ENCODE measurements at regions of chr9 and their contacts with region 1.

Region 1: GRCh38 chr9:92293452-92294296 is at the start of gene IARS1:
- DNase-seq: peak; percentile 99
- ATAC-seq: peak; percentile 95
- H3K4me3 Mint-ChIP-seq: peak within 1 kb of the TSS; percentile 87
- H3K27ac Mint-ChIP-seq: peak within 1 kb of the TSS; percentile 98
- H3K4me1 Mint-ChIP-seq: peaks cover 56% of the 10 kb centered on the region
- H3K27me3 Mint-ChIP-seq: no peaks in the 10 kb centered on the region
- total RNA-seq, gene IARS1: 261 to 286 TPM

Region 2: DNA sequence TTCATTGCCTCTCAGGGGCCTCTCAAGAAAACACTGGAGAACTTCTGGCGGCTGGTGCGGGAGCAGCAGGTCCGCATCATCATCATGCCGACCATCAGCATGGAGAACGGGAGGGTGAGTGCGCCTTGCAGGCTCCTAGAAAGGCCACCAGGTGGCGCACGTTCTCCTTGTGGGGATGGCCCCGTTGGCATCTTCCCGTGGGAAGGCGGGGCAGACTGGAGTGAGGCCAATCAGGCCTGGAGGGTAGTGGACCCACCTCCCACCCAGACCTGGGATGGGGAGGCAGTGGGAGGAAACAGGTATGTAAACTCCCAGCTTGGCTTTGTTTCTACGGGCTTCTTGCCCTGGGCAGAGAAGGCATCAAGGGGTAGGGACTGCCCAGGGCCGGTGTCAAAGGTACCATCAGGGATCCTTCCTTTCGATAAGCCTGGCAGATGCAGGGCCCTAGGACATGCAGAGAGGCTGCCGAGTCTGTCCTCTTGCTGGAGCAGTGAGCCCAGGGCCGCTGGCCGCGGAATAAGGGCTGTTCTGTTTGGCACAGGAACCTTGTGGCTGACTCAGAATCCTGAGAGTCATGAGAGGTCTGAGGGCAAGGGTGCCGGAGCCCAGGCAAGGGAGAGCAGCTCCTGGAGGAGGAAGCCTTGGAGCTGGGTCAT is 159.6 kb before region 1 on chr9:
- CTCF ChIA-PET with region 1: interaction called, 3 read pairs
- POLR2A ChIA-PET with region 1: no interaction called
- intact Hi-C with region 1: loop called in 1 of 2 experiments (anchors 5 kb)
- DNase-seq: peak; percentile 91
- ATAC-seq: peak; percentile 92
- H3K4me3 Mint-ChIP-seq: peak overlapping the region; percentile 15
- H3K27ac Mint-ChIP-seq: no peak overlapping the region
- H3K4me1 Mint-ChIP-seq: peaks cover 4% of the 10 kb centered on the region
- H3K27me3 Mint-ChIP-seq: peaks cover 22% of the 10 kb centered on the region

Region 3: GRCh38 chr9:92254381-92255337 is 39.0 kb before region 1 on chr9:
- CTCF ChIA-PET with region 1: no interaction called
- POLR2A ChIA-PET with region 1: interaction called, 3 read pairs
- intact Hi-C with region 1: loop called (anchors 5 kb)
- DNase-seq: no peak
- ATAC-seq: no peak
- H3K4me3 Mint-ChIP-seq: no peak overlapping the region
- H3K27ac Mint-ChIP-seq: no peak overlapping the region
- H3K4me1 Mint-ChIP-seq: no peaks in the 10 kb centered on the region
- H3K27me3 Mint-ChIP-seq: no peaks in the 10 kb centered on the region

Region 4: DNA sequence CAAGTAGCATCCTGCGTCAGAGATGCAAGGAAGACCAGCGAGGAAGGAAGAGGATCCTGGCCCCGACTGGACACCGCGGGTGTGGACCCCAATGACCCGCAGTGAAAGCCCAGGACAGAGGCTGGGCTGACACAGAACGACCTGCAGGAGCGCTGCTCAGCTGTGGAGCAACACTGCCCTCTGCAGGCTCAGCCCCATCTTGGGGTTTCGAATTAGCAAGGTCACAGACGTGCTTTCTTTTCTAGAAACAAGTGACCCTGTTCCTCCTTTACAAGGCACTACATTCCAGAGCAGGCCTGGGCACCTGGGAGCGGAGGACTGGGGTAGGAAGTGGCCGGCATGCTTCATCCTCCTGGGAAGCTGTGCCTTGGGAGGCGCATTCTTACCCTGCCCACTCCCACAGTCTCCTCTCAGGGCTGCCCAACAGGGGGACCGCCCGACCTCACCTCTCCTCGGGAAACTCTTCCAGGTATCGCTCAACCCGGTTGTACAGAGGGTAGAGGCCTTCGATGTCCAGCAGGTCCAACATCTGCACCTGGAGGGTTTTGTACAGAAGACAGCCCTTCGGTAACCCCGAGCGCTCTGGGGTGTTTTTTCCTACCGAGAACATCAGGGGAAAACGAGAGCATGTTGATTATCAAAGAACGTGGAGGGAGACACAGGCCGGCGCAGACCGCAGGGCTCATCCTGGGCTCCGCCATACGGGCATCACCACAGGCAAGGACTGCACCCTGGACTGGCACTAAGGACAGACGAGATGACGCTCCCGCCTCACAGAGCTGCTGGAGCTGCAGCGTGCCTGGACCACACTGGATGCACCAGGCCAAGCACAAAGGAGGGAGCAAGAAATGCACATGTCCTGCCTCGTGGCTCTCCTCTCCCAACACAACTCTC is 341.3 kb after region 1 on chr9:
- CTCF ChIA-PET with region 1: no interaction called
- POLR2A ChIA-PET with region 1: no interaction called
- intact Hi-C with region 1: loop called in 1 of 2 experiments (anchors 10 kb)
- DNase-seq: peak; percentile 83
- ATAC-seq: peak; percentile 69
- H3K4me3 Mint-ChIP-seq: no peak overlapping the region
- H3K27ac Mint-ChIP-seq: no peak overlapping the region
- H3K4me1 Mint-ChIP-seq: peaks cover 6% of the 10 kb centered on the region
- H3K27me3 Mint-ChIP-seq: no peaks in the 10 kb centered on the region

Region 5: GRCh38 chr9:92877531-92878430 is 584.1 kb after region 1 on chr9 and contains the start of gene ZNF484:
- CTCF ChIA-PET with region 1: no interaction called
- POLR2A ChIA-PET with region 1: no interaction called
- intact Hi-C with region 1: loop called in 1 of 2 experiments (anchors 10 kb)
- DNase-seq: peak; percentile 98
- ATAC-seq: peak; percentile 97
- H3K4me3 Mint-ChIP-seq: peak within 1 kb of the TSS; percentile 99
- H3K27ac Mint-ChIP-seq: peak within 1 kb of the TSS; percentile 97
- H3K4me1 Mint-ChIP-seq: peaks cover 46% of the 10 kb centered on the region
- H3K27me3 Mint-ChIP-seq: no peaks in the 10 kb centered on the region
- total RNA-seq, gene ZNF484: 7.2 to 9.8 TPM

Measured in activated CD4-positive, alpha-beta T cell treated with anti-CD3 and anti-CD28 coated beads for 36 hours (primary cell).